Prostate gland (tissue), 2 donors: ENCODE measurements at regions of chr7 and their contacts with region 1.

Region 1: GRCh38 chr7:99616359-99617191 is at the start of gene ZSCAN25:
- DNase-seq: peak; percentile 76
- H3K4me3 ChIP-seq: peak within 1 kb of the TSS; percentile 76 to 88
- H3K27ac ChIP-seq: peak within 1 kb of the TSS; percentile 65 to 78
- H3K4me1 ChIP-seq: peaks cover 6% of the 10 kb centered on the region
- H3K27me3 ChIP-seq: no peaks in the 10 kb centered on the region
- CTCF ChIP-seq: peak in 1 of 4 experiments; percentile 24
- POLR2A ChIP-seq: no peak
- total RNA-seq, gene ZSCAN25: 20.1 to 28.0 TPM

Region 2: DNA sequence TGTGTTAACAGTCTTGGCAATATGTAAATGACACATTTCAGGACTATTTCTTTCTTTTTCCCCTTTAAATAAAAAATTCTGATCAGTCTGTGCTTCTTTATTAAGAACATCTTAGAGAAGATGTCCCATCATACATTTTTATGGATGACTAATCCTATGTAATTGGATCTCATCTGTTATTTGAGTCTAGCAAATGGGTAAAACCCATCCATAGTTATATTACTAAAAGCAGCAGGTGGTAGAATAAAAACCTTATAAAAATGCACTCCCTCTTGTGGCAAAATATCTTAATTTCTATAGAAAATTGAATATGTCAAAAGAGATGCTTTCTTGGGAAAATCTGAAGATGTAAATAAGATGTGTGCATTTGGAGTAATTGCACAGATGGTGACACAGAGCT is 703.0 kb before region 1 on chr7:
- intact Hi-C with region 1: no loop called
- DNase-seq: no peak
- H3K4me3 ChIP-seq: no peak overlapping the region
- H3K27ac ChIP-seq: no peak overlapping the region
- H3K4me1 ChIP-seq: no peaks in the 10 kb centered on the region
- H3K27me3 ChIP-seq: no peaks in the 10 kb centered on the region
- CTCF ChIP-seq: no peak
- POLR2A ChIP-seq: no peak

Region 3: DNA sequence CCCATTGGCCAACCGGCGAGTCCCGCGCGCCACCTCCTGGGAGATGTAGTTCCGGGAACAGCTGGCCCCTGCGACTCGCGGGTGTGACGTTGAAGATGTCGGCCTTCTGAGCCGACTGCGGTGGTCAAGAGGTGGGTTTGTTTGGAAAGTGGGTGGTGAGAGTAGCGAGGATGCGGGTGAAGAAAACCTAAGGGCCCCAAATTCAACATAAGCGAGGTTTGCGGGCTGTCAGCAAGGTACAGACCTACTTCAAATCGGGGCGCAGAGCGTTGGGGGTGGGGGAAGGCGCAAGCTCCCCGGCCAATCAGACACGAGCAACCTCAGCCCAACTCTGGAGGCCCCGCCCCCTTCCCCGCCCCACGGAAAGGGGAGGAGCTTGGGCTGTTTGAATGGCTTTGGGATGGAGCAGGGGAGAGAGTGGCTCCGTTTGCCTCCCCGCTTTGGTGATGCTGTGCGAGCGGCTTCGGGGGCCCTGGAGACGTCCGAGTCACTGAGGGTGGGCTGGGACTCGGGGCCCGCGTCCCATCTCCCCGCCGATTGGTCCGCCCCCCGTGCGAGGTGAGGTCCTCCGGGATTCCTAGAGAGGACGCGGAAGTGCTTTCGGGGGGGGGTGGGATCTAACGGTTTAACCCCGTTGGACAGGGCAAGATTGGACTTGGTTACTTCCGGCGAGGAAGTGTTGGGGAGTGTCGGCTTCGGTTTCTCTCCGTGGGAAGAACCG is 111.8 kb before region 1 on chr7 and contains the start of gene ZKSCAN5:
- intact Hi-C with region 1: loop called (anchors 5 kb)
- DNase-seq: peak; percentile 97
- H3K4me3 ChIP-seq: peak within 1 kb of the TSS; percentile 51 to 72
- H3K27ac ChIP-seq: peak within 1 kb of the TSS; percentile 82 to 95
- H3K4me1 ChIP-seq: peaks cover 19% of the 10 kb centered on the region
- H3K27me3 ChIP-seq: no peaks in the 10 kb centered on the region
- CTCF ChIP-seq: peak in 3 of 4 experiments; percentile 37 to 54 (median 44)
- POLR2A ChIP-seq: peak; percentile 27
- total RNA-seq, gene ZKSCAN5: 7.8 to 13.2 TPM

Region 4: DNA sequence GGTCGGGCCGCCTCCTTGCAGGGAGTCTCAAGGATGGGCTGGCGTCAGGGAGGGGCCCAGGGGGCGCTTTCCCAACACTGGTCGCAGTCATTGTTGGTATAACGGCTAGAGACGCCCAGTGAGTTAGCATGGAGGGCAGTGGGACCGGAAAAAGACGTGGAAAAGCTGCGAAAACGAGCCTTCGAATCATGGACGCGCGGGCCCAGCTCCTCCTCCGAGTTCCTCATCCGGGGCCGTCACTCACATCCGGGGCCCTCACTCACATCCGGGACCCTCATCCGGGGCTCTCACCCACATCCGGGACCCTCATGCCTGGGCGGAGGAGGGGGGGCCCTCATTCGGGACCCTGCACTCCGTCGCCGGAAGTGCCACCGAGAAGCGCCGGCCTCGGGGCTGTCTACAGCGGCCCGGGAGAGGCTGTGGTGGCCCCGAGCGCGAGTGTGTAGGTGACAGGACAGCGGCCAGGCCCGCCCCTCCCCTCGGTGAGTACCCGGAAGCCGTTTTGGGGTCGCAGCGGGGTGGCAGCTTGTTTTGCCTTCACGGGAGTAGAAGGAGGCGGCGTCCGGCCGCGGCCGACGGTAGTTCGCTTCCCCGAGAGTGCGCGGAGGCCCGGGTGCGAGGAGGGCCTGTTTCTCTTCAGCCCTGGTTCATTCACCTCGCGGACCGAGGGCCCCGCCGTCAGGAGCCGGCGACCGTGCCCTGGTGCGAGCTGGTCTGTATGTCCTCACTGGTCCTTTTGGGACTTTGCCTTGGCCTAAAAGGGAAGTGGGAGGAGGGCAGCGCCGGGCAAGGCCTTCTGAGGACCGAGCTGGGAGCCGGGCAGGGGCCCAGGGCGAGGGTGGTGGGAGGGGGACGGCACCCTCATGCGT is 58.0 kb before region 1 on chr7 and contains the start of gene ZNF655:
- intact Hi-C with region 1: loop called (anchors 5 kb)
- DNase-seq: peak; percentile 87
- H3K4me3 ChIP-seq: peak within 1 kb of the TSS; percentile 74 to 78
- H3K27ac ChIP-seq: peak within 1 kb of the TSS; percentile 96
- H3K4me1 ChIP-seq: no peaks in the 10 kb centered on the region
- H3K27me3 ChIP-seq: no peaks in the 10 kb centered on the region
- CTCF ChIP-seq: no peak
- POLR2A ChIP-seq: peak; percentile 75
- total RNA-seq, gene ZNF655: 79.7 to 112 TPM

Region 5: GRCh38 chr7:99631295-99632109 is 14.9 kb after region 1 on chr7:
- intact Hi-C with region 1: no loop called
- DNase-seq: peak; percentile 50
- H3K4me3 ChIP-seq: no peak overlapping the region
- H3K27ac ChIP-seq: peak overlapping the region in 1 of 2 donors; percentile 12
- H3K4me1 ChIP-seq: no peaks in the 10 kb centered on the region
- H3K27me3 ChIP-seq: no peaks in the 10 kb centered on the region
- CTCF ChIP-seq: peak in 3 of 4 experiments; percentile 23 to 47 (median 42)
- POLR2A ChIP-seq: no peak

Region 6: GRCh38 chr7:99928994-99929729 is 312.6 kb after region 1 on chr7 and contains the start of gene GJC3:
- intact Hi-C with region 1: loop called (anchors 10 kb)
- DNase-seq: peak; percentile 61
- H3K4me3 ChIP-seq: peak within 1 kb of the TSS in 1 of 2 donors; percentile 16
- H3K27ac ChIP-seq: peak within 1 kb of the TSS; percentile 38 to 51
- H3K4me1 ChIP-seq: peaks cover 6% of the 10 kb centered on the region
- H3K27me3 ChIP-seq: no peaks in the 10 kb centered on the region
- CTCF ChIP-seq: peak in 3 of 4 experiments; percentile 45 to 71 (median 67)
- POLR2A ChIP-seq: no peak
- total RNA-seq, gene GJC3: 1.2 to 3.2 TPM

Region 7: GRCh38 chr7:99975782-99976521 is 359.4 kb after region 1 on chr7 and contains the start of gene AZGP1:
- intact Hi-C with region 1: no loop called
- DNase-seq: peak; percentile 86
- H3K4me3 ChIP-seq: peak within 1 kb of the TSS; percentile 42 to 50
- H3K27ac ChIP-seq: peak within 1 kb of the TSS; percentile 85 to 87
- H3K4me1 ChIP-seq: no peaks in the 10 kb centered on the region
- H3K27me3 ChIP-seq: no peaks in the 10 kb centered on the region
- CTCF ChIP-seq: no peak
- POLR2A ChIP-seq: peak; percentile 59
- total RNA-seq, gene AZGP1: 1,167 to 4,716 TPM